ENCODE measurements at regions of chr3 and their contacts with region 1.

Region 1: GRCh38 chr3:61685755-61686154 is 124.4 kb downstream of the PTPRG start:
- DNase-seq: no peak
- ATAC-seq: no peak

Region 2: GRCh38 chr3:61733711-61734275 is 48.0 kb after region 1 on chr3:
- intact Hi-C with region 1: loop called (anchors 2 kb)
- DNase-seq: no peak
- ATAC-seq: peak; percentile 65

Measured in sciatic nerve (tissue), 2 donors.